ENCODE measurements at regions of chr7 and their contacts with region 1.

Region 1: GRCh38 chr7:108146070-108146837 is 16.1 kb upstream of the LAMB4 start:
- DNase-seq: peak; percentile 80
- H3K4me3 ChIP-seq: no peak overlapping the region
- H3K27ac ChIP-seq: no peak overlapping the region
- H3K4me1 ChIP-seq: no peaks in the 10 kb centered on the region
- H3K27me3 ChIP-seq: no peaks in the 10 kb centered on the region
- CTCF ChIP-seq: peak; percentile 69 to 79
- POLR2A ChIP-seq: no peak

Region 2: GRCh38 chr7:107743567-107744344 is 402.5 kb before region 1 on chr7 and contains the start of gene CBLL1:
- CTCF ChIA-PET with region 1: interaction called, 3 read pairs
- POLR2A ChIA-PET with region 1: no interaction called
- dilution Hi-C with region 1: no loop called
- intact Hi-C with region 1: loop called (anchors 5 kb)
- DNase-seq: peak; percentile 98
- H3K4me3 ChIP-seq: peak within 1 kb of the TSS; percentile 45 to 94 (median 79)
- H3K27ac ChIP-seq: peak within 1 kb of the TSS; percentile 96
- H3K4me1 ChIP-seq: peaks cover 38% of the 10 kb centered on the region
- H3K27me3 ChIP-seq: no peaks in the 10 kb centered on the region
- CTCF ChIP-seq: peak; percentile 65 to 76
- POLR2A ChIP-seq: peak; percentile 2
- total RNA-seq, gene CBLL1: 30.6 and 31.1 TPM in 2 replicates

Region 3: GRCh38 chr7:107836237-107837144 is 309.8 kb before region 1 on chr7:
- CTCF ChIA-PET with region 1: no interaction called
- POLR2A ChIA-PET with region 1: no interaction called
- dilution Hi-C with region 1: no loop called
- intact Hi-C with region 1: no loop called
- DNase-seq: peak; percentile 94
- H3K4me3 ChIP-seq: no peak overlapping the region
- H3K27ac ChIP-seq: no peak overlapping the region
- H3K4me1 ChIP-seq: peaks cover 5% of the 10 kb centered on the region
- H3K27me3 ChIP-seq: peaks cover 5 to 30% of the 10 kb centered on the region in 2 experiments
- CTCF ChIP-seq: no peak
- POLR2A ChIP-seq: peak; percentile 22

Region 4: DNA sequence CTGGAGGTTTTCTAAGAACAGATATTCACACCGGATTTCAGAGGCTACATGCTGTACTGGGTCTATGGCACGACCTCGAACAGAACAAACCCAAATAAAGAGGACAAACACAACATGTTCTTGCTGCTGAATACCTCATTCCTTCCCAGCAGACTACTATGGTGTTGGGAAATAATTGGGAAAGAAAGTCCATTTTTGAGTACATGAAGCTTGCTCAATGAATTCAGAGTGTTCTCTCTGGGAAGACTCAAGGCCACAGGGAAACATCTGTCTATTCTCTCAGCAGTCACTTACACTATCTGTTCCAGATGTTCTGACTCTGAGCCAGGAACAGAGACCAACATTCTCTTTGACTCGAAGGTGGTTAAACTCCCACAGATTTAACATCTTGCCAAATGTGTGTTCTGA is 174.2 kb before region 1 on chr7:
- CTCF ChIA-PET with region 1: interaction called, 19 read pairs
- POLR2A ChIA-PET with region 1: no interaction called
- dilution Hi-C with region 1: no loop called
- intact Hi-C with region 1: no loop called
- DNase-seq: peak; percentile 29
- H3K4me3 ChIP-seq: no peak overlapping the region
- H3K27ac ChIP-seq: peak overlapping the region; percentile 18
- H3K4me1 ChIP-seq: peaks cover 55% of the 10 kb centered on the region
- H3K27me3 ChIP-seq: no peaks in the 10 kb centered on the region
- CTCF ChIP-seq: no peak
- POLR2A ChIP-seq: no peak

Region 5: GRCh38 chr7:107995184-107996071 is 150.8 kb before region 1 on chr7:
- CTCF ChIA-PET with region 1: interaction called, 47 read pairs
- POLR2A ChIA-PET with region 1: no interaction called
- dilution Hi-C with region 1: loop called (anchors 5 kb)
- intact Hi-C with region 1: loop called (anchors 1 kb)
- DNase-seq: peak; percentile 99
- H3K4me3 ChIP-seq: peak overlapping the region in 1 of 3 experiments; percentile 30
- H3K27ac ChIP-seq: peak overlapping the region; percentile 99
- H3K4me1 ChIP-seq: peaks cover 72% of the 10 kb centered on the region
- H3K27me3 ChIP-seq: no peaks in the 10 kb centered on the region
- CTCF ChIP-seq: no peak
- POLR2A ChIP-seq: peak; percentile 55

Region 6: DNA sequence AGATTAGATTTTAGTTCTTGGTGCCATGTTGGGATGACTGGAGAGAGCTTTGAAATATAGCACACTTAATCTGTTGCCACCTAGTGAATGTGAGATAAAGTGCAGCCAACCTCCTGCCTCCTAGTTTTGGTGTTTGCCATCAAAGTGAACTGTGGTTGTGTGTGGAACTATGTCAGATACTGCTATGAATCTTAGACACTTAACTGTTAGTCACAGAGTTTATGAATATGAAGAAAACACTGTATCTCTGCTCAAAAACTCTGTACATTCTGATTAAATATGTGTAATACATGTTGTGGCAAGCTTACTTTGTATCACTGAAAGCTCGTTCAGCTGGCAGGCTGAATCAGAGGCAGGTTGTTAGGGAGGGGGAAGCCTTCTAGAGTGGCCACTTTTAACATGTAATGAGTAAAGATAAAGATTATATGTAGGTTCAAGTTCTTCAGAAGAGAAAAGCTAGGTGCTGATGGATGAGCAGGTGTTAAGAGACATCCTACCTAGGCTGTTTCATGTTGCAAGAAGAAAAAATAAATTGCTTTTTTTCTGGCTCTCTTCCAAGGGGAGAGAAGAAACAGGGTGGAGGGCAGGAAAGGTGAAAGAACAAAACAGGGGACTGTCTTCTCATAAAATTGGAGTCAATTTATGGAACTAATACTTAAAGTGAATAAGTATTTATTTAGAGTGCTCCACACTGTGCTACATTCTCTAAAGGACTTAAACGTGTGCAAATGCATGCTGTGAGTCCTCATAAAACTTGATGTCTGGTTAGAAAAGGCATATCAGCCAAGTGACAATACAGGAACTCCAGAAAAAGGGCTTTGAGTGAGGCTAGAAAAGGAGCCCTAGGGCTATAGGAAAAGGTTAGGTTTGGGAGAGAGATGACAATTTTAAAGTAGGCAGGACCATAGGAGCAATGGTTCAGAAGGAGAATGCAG is 129.1 kb before region 1 on chr7:
- CTCF ChIA-PET with region 1: interaction called, 36 read pairs
- POLR2A ChIA-PET with region 1: no interaction called
- dilution Hi-C with region 1: no loop called
- intact Hi-C with region 1: no loop called
- DNase-seq: peak; percentile 87
- H3K4me3 ChIP-seq: no peak overlapping the region
- H3K27ac ChIP-seq: peak overlapping the region; percentile 96
- H3K4me1 ChIP-seq: peaks cover 67% of the 10 kb centered on the region
- H3K27me3 ChIP-seq: no peaks in the 10 kb centered on the region
- CTCF ChIP-seq: peak; percentile 52
- POLR2A ChIP-seq: no peak

Region 7: DNA sequence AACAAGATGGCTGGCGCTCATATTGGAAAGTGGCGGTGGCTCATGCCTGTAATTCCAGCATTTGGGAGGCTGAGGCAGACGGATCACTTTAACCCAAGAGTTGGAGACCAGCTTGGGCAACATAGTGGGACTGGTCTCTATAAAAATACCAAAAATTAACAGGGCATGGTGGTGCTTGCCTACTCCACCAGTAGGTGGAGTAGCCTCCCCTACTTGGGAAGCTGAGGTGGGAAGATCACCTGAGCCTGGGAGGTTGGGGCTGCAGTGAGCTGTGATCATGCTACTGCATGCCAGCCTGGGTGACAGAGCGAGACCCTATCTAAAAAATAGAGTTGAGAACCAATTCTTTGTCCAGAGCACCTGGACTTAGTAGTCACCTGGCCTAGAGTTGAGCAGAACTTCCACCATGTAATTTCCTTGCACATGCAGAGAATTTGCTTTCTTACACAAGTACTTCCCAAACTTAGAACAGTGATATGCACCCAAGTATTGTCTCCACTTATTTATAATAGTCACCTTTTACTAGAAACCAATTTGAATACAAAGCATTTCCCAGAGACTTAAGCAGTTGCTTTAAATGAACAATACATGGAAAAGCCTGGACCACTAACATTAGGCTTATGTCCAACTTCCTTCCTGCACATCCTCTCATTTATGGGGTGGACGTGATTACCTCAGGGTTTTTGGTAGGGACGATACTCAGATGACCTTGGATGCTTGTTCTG is 32.0 kb before region 1 on chr7:
- CTCF ChIA-PET with region 1: interaction called, 17 read pairs
- POLR2A ChIA-PET with region 1: no interaction called
- dilution Hi-C with region 1: no loop called
- intact Hi-C with region 1: loop called (anchors 1 kb)
- DNase-seq: peak; percentile 65
- H3K4me3 ChIP-seq: no peak overlapping the region
- H3K27ac ChIP-seq: no peak overlapping the region
- H3K4me1 ChIP-seq: peaks cover 8% of the 10 kb centered on the region
- H3K27me3 ChIP-seq: no peaks in the 10 kb centered on the region
- CTCF ChIP-seq: peak; percentile 29 to 42
- POLR2A ChIP-seq: no peak

Region 8: DNA sequence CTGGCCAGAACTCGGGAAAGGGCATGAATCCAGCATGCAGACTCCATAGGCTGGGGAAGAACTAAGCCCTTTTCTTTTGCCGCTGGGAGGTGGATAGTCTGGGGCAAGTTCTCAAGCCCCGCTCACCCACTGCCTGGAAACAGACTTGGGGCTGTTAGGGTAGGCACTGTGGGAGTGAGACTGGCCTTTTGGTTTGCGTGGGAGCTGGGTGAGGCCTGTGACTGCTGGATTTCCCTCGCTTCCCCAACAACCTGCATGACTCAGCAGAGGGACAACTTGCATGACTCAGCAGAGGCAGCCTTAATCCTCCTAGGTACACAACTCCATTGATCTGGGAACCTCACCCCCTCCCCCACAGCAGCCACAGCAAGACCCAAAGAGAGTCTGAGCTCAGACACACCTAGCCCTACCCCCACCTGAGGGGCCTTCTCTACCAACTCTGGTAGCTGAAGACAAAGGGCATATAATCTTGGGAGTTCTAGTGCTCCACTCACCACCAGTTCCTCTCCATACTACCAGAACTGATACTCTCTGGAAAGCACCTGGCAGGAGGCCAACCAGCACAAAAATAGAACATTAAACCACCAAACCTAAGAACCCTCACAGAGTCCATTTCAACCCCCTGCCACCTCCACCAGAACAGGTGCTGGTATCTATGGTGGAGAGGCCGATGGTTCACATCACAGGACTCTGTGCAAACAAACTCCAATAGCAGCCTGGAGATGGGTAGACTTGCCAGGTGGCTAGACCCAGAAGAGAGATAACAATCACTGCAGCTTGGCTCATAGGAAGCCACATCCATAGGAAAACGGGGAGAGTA is 65.3 kb after region 1 on chr7:
- CTCF ChIA-PET with region 1: no interaction called
- POLR2A ChIA-PET with region 1: no interaction called
- dilution Hi-C with region 1: no loop called
- intact Hi-C with region 1: no loop called
- DNase-seq: peak; percentile 73
- H3K4me3 ChIP-seq: no peak overlapping the region
- H3K27ac ChIP-seq: peak overlapping the region; percentile 76
- H3K4me1 ChIP-seq: peaks cover 14% of the 10 kb centered on the region
- H3K27me3 ChIP-seq: no peaks in the 10 kb centered on the region
- CTCF ChIP-seq: no peak
- POLR2A ChIP-seq: no peak

Measured in endothelial cell of umbilical vein (primary cell).